ENCODE measurements at regions of chr6 and their contacts with region 1.

Region 1: GRCh38 chr6:26204332-26205165 is 117.3 kb downstream of the HFE start:
- DNase-seq: peak; percentile 96
- H3K4me3 Mint-ChIP-seq: no peak overlapping the region
- H3K27ac Mint-ChIP-seq: no peak overlapping the region
- H3K4me1 Mint-ChIP-seq: peaks cover 31% of the 10 kb centered on the region
- H3K27me3 Mint-ChIP-seq: peaks cover 4% of the 10 kb centered on the region

Region 2: GRCh38 chr6:26141378-26141904 is 63.1 kb before region 1 on chr6:
- intact Hi-C with region 1: no loop called
- DNase-seq: no peak
- H3K4me3 Mint-ChIP-seq: no peak overlapping the region
- H3K27ac Mint-ChIP-seq: no peak overlapping the region
- H3K4me1 Mint-ChIP-seq: no peaks in the 10 kb centered on the region
- H3K27me3 Mint-ChIP-seq: peaks cover 2% of the 10 kb centered on the region

Region 3: GRCh38 chr6:26183581-26184366 is 20.8 kb before region 1 on chr6:
- intact Hi-C with region 1: loop called (anchors 1 kb)
- DNase-seq: peak; percentile 92
- H3K4me3 Mint-ChIP-seq: peak overlapping the region; percentile 93
- H3K27ac Mint-ChIP-seq: peak overlapping the region; percentile 98
- H3K4me1 Mint-ChIP-seq: peaks cover 55% of the 10 kb centered on the region
- H3K27me3 Mint-ChIP-seq: no peaks in the 10 kb centered on the region

Region 4: DNA sequence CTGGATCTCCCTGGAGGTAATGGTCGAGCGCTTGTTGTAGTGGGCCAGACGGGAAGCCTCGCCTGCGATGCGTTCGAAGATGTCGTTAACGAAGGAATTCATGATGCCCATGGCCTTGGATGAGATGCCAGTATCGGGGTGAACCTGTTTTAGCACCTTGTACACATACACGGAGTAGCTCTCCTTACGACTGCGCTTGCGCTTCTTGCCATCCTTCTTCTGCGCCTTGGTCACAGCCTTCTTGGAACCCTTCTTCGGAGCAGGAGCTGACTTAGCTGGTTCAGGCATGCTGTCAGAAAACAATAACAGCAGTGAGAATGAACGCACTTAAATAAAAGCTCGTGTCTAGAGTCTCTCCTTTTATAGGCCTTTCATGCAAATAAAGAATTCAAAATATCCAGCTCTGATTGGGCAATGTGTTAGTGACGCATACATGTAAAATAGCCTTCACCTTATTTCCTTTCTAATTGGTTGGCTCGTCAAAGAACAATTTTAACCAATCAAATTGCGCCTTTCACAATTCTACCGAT is 11.9 kb after region 1 on chr6:
- intact Hi-C with region 1: loop called (anchors 1 kb)
- DNase-seq: peak; percentile 96
- H3K4me3 Mint-ChIP-seq: no peak overlapping the region
- H3K27ac Mint-ChIP-seq: no peak overlapping the region
- H3K4me1 Mint-ChIP-seq: peaks cover 27% of the 10 kb centered on the region
- H3K27me3 Mint-ChIP-seq: no peaks in the 10 kb centered on the region

Region 5: DNA sequence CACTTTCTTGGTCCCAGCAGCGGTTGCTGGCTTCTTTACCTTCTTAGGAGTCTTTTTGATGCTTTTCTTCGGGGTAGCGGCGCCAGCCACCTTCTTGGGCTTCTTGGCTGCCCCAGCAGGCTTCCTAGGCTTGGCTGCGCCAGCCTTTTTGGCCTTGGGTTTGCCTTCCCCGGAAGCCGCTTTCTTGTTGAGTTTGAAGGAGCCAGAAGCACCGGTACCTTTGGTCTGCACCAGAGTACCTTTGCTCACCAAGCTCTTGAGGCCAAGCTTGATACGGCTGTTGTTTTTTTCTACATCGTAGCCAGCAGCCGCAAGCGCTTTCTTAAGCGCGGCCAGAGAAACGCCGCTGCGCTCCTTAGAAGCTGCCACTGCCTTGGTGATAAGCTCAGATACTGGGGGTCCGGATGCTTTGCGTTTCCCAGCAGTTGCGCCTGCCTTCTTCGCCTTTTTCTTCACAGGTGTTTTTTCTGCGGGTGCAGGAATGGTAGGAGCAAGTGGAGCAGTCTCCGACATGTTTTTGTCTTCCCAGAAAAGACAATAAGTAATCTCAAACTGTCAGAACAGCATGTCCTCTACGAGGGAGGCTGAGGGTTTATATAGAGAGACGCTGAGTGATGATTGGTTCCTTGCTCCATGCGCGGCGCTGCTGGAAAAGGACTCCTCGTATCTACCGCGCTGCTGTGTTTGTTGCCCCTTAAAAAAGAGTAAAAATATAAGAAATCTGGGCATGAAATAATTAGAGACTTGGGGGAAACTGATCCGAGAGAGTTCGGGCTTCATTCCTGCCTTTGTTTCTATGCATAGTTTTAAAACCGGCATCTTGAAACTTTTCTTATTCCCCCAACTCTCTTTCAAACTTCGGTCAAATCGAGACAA is 30.1 kb after region 1 on chr6:
- intact Hi-C with region 1: loop called (anchors 1 kb)
- DNase-seq: peak; percentile 95
- H3K4me3 Mint-ChIP-seq: peak overlapping the region; percentile 82
- H3K27ac Mint-ChIP-seq: peak overlapping the region; percentile 97
- H3K4me1 Mint-ChIP-seq: peaks cover 39% of the 10 kb centered on the region
- H3K27me3 Mint-ChIP-seq: no peaks in the 10 kb centered on the region

Region 6: DNA sequence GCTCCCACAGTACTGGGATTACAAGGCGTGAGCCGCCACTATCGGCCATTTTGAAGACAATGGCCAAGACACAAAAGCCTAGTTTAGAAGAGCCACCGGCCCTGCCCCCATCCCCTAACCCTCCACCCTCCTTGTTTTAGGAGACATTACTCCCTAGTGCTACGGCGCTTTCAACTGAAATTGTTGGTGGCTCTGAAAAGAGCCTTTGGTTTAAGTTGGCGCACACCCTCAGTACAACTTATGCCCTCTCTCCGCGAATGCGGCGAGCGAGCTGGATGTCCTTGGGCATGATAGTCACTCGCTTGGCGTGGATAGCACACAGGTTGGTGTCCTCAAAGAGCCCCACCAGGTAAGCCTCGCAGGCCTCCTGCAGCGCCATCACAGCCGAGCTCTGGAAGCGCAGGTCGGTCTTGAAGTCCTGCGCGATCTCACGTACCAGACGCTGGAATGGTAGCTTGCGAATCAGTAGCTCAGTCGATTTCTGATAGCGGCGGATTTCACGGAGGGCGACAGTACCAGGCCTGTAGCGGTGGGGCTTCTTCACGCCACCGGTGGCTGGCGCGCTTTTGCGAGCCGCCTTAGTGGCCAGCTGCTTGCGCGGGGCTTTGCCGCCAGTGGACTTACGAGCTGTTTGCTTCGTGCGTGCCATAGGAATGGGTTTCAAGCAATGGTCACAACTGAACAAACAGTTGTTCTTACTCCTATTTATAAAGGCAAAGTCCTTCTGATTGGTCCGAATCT is 45.6 kb after region 1 on chr6:
- intact Hi-C with region 1: loop called (anchors 2 kb)
- DNase-seq: peak; percentile 92
- H3K4me3 Mint-ChIP-seq: peak overlapping the region; percentile 95
- H3K27ac Mint-ChIP-seq: peak overlapping the region; percentile 95
- H3K4me1 Mint-ChIP-seq: peaks cover 37% of the 10 kb centered on the region
- H3K27me3 Mint-ChIP-seq: no peaks in the 10 kb centered on the region